K562 (cell line): ENCODE measurements at regions of chr18 and their contacts with region 1.

Region 1: GRCh38 chr18:57666818-57667497 is 45.3 kb upstream of the NARS1 start:
- DNase-seq: peak; percentile 57 to 80 (median 64)
- ATAC-seq: peak; percentile 92
- H3K4me3 ChIP-seq: no peak overlapping the region
- H3K27ac ChIP-seq: peak overlapping the region; percentile 77
- H3K4me1 ChIP-seq: peaks cover 3 to 23% of the 10 kb centered on the region in 2 experiments; a peak in 3 of 5 replicates
- H3K27me3 ChIP-seq: no peaks in the 10 kb centered on the region
- CTCF ChIP-seq: no peak
- EP300 ChIP-seq: peak; percentile 94
- POLR2A ChIP-seq: no peak
- RAD21 ChIP-seq: no peak

Region 2: GRCh38 chr18:57776767-57777166 is 109.8 kb after region 1 on chr18:
- CTCF ChIA-PET with region 1: no interaction called
- POLR2A ChIA-PET with region 1: no interaction called
- in situ Hi-C with region 1: no loop called
- intact Hi-C with region 1: loop called (anchors 5 kb)
- DNase-seq: peak; percentile 60 to 82 (median 65)
- ATAC-seq: peak; percentile 85
- H3K4me3 ChIP-seq: no peak overlapping the region
- H3K27ac ChIP-seq: peak overlapping the region; percentile 67
- H3K4me1 ChIP-seq: peaks cover 0 to 16% of the 10 kb centered on the region in 2 experiments; a peak in 4 of 5 replicates
- H3K27me3 ChIP-seq: no peaks in the 10 kb centered on the region
- CTCF ChIP-seq: no peak
- EP300 ChIP-seq: peak; percentile 93
- POLR2A ChIP-seq: no peak
- RAD21 ChIP-seq: no peak